Esophagus squamous epithelium (tissue), 5 donors: ENCODE measurements at regions of chr2 and their contacts with region 1.

Region 1: GRCh38 chr2:200319548-200320337 is 13.2 kb downstream of the SPATS2L start:
- DNase-seq: no peak
- H3K4me3 ChIP-seq: no peak overlapping the region
- H3K27ac ChIP-seq: peak overlapping the region in 3 of 4 donors; percentile 5 to 44 (median 13)
- H3K4me1 ChIP-seq: peaks cover 10 to 97% (median 35%) of the 10 kb centered on the region in 3 donors
- H3K27me3 ChIP-seq: no peaks in the 10 kb centered on the region
- CTCF ChIP-seq: no peak
- POLR2A ChIP-seq: no peak

Region 2: DNA sequence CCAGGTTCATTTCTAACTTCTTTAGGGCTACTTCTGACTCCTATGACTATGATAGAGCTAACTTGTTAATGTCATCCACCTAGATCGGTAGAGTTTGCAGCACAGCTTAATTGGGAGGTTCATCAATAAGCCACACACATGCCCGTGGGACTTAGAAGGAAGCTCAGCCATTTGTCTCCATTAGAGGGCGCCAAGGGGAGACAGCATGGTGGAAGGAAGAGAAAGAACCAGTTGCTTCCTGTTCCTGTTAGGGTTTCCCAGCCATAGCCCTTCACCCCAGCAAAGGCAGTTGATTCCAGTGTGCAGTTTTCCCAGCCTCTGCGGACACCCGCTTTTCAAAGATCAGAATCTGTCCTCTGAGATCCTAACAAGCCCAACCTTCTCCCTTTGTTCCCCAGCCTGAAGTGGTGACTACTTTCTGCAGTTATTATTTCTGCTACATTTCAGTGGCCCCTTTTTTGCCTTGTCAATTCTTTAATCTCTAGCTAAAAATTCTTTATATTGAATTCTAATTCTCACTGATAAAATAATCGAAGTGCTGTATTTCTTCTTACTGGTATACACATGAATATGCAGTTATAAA is 334.0 kb before region 1 on chr2:
- intact Hi-C with region 1: loop called (anchors 10 kb)
- DNase-seq: no peak
- H3K4me3 ChIP-seq: no peak overlapping the region
- H3K27ac ChIP-seq: no peak overlapping the region
- H3K4me1 ChIP-seq: peaks cover 0 to 30% (median 8%) of the 10 kb centered on the region in 3 donors
- H3K27me3 ChIP-seq: no peaks in the 10 kb centered on the region
- CTCF ChIP-seq: peak in 5 of 6 experiments; percentile 43 to 76 (median 52)
- POLR2A ChIP-seq: no peak